ENCODE measurements at regions of chr11 and their contacts with region 1.

Region 1: GRCh38 chr11:112588252-112588694 is 327.6 kb upstream of the PLET1 start:
- DNase-seq: peak; percentile 63
- ATAC-seq: peak; percentile 87 to 91

Region 2: DNA sequence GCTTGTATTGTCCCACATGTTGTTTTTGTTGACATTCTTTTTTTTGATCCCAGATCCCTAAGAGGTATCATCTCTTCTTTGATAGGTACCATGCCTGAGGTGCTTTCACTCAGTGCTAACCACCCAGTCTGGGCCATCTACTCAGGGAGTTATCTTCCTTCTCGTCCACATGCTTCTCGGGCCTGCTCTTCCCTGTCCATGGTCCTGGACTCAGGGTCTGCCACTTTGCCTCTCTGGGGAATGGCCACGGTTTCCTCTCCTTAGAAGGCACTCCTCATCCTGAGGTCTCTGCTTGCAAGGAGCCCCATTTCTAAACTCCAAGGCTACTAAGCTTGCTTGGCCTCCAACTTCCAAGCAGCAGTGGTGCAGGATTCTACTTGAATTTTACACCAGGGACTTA is 145.9 kb after region 1 on chr11:
- intact Hi-C with region 1: loop called in 1 of 2 experiments (anchors 10 kb)
- DNase-seq: peak; percentile 35
- ATAC-seq: peak; percentile 61 to 67

Region 3: GRCh38 chr11:112795142-112795815 is 207.0 kb after region 1 on chr11:
- intact Hi-C with region 1: loop called (anchors 5 to 10 kb)
- DNase-seq: peak; percentile 29
- ATAC-seq: peak; percentile 33 to 40

Region 4: DNA sequence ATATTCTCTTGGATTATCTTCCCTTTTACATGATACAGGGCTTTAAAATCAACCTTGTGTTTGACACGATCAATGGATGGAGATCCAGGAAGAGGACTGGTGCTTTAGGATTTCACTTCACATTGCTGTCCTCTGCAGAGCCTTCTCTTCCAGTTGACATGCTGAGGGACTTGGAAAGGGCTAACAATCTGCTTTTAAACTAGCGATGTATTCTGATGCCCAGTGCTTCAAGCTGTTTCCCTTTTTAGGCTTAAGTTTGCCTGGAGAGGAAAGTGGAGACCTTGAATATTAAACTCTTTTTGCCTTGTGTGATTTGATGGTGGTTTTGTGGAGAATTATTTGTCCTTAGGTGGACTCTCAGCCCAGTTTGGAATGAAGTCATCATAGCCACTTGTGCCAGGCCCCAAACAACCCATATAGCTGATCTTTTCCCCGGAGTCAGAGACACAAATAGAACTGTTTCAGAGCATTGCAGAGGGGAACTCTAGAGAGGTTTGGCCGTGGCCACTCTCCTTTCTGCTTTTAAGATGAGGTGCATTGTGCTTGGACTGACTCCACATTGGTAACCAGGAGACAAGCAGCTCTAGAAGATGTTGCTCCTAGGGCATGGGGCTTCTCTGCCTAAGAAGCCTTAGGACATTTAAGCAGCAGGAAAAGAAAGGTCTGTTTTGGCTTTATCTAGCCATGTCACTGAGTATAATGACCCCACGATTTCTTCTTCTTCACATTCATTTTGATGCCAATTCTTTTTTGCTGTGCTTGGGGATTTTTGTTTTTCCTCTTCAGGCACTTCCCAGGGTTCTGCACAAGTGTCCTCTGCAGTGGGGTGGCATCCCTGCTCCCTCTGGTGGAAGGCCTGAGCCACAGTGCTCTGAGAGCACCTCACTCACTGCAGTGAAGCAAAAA is 525.8 kb after region 1 on chr11:
- intact Hi-C with region 1: loop called (anchors 5 to 10 kb)
- DNase-seq: peak; percentile 62
- ATAC-seq: peak; percentile 88 to 94

Region 5: GRCh38 chr11:113289431-113290187 is 701.3 kb after region 1 on chr11:
- intact Hi-C with region 1: loop called (anchors 1 to 5 kb)
- DNase-seq: peak; percentile 46
- ATAC-seq: peak; percentile 72 to 87